Heart right ventricle (tissue), 16 donors: ENCODE measurements at regions of chr19 and their contacts with region 1.

Region 1: GRCh38 chr19:15836595-15837337 is 21.3 kb upstream of the OR10H1 start:
- DNase-seq: peak; percentile 95 to 99
- ATAC-seq: peak; percentile 98 to 100 (median 100)
- H3K4me3 ChIP-seq: peak overlapping the region; percentile 63 to 90 (median 78)
- H3K27ac ChIP-seq: peak overlapping the region; percentile 80 to 99 (median 97)
- H3K4me1 ChIP-seq: peaks cover 0 to 20% (median 7%) of the 10 kb centered on the region in 9 donors
- H3K27me3 ChIP-seq: peaks cover 0 to under 1% (median 0%) of the 10 kb centered on the region in 7 donors
- CTCF ChIP-seq: no peak

Region 2: GRCh38 chr19:14517840-14518505 is 1318.8 kb before region 1 on chr19 and contains the start of gene DNAJB1:
- intact Hi-C with region 1: no loop called
- DNase-seq: peak; percentile 83 to 87
- ATAC-seq: peak; percentile 81 to 90 (median 88)
- H3K4me3 ChIP-seq: peak within 1 kb of the TSS; percentile 65 to 99 (median 92)
- H3K27ac ChIP-seq: peak within 1 kb of the TSS; percentile 96 to 100 (median 100)
- H3K4me1 ChIP-seq: peaks cover 15 to 55% (median 42%) of the 10 kb centered on the region in 9 donors
- H3K27me3 ChIP-seq: no peaks in the 10 kb centered on the region
- CTCF ChIP-seq: no peak
- total RNA-seq, gene DNAJB1: 40.3 to 99.0 (median 46.4) TPM

Region 3: DNA sequence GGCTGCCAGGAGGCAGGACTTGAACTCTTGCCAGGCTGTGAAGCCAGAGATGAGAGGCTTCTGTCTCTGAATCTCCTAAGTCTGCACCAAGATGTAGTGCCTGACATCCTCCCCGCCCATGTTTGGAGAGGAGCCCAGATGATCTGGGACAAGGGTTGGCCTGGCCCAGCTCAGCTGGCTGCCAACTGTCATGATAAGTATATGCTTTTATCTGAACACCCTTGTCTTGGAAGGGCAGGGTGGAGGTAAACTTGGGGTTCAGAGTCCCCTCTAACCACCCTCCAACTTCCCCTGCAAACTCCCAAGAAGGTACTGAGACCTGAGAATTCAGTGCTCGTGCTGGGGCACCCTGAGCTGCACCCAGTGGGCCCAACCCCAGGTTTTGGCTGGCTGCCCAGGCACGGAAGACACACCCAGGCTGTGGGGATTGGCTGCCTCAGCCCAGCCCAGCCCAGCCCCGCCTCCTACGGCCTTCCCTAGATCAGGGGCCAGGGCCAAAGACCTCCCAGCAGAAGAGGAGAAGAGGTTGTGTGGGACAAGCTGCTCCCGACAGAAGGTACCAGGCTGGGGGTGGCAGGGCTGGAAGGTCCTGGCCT is 164.1 kb before region 1 on chr19 and contains the start of gene CYP4F12:
- intact Hi-C with region 1: loop called in 1 of 10 experiments (anchors 5 kb)
- DNase-seq: peak; percentile 88 to 92
- ATAC-seq: peak; percentile 95 to 100 (median 98)
- H3K4me3 ChIP-seq: peak within 1 kb of the TSS in 8 of 10 donors; percentile 3 to 40 (median 25)
- H3K27ac ChIP-seq: peak within 1 kb of the TSS in 9 of 10 donors; percentile 20 to 78 (median 56)
- H3K4me1 ChIP-seq: peaks cover 0 to 15% (median 10%) of the 10 kb centered on the region in 9 donors
- H3K27me3 ChIP-seq: peaks cover 0 to 13% (median 0%) of the 10 kb centered on the region in 7 donors
- CTCF ChIP-seq: no peak
- total RNA-seq, gene CYP4F12: 0.92 to 6.8 (median 2.7) TPM

Region 4: GRCh38 chr19:15869109-15869555 is 32.4 kb after region 1 on chr19:
- intact Hi-C with region 1: no loop called
- DNase-seq: peak in 1 of 2 donors; percentile 15
- ATAC-seq: peak in 4 of 8 donors; percentile 53 to 74 (median 61)
- H3K4me3 ChIP-seq: no peak overlapping the region
- H3K27ac ChIP-seq: no peak overlapping the region
- H3K4me1 ChIP-seq: peaks cover 0 to 3% (median 0%) of the 10 kb centered on the region in 9 donors
- H3K27me3 ChIP-seq: peaks cover 0 to 44% (median 25%) of the 10 kb centered on the region in 7 donors
- CTCF ChIP-seq: peak; percentile 33 to 65 (median 55)

Region 5: DNA sequence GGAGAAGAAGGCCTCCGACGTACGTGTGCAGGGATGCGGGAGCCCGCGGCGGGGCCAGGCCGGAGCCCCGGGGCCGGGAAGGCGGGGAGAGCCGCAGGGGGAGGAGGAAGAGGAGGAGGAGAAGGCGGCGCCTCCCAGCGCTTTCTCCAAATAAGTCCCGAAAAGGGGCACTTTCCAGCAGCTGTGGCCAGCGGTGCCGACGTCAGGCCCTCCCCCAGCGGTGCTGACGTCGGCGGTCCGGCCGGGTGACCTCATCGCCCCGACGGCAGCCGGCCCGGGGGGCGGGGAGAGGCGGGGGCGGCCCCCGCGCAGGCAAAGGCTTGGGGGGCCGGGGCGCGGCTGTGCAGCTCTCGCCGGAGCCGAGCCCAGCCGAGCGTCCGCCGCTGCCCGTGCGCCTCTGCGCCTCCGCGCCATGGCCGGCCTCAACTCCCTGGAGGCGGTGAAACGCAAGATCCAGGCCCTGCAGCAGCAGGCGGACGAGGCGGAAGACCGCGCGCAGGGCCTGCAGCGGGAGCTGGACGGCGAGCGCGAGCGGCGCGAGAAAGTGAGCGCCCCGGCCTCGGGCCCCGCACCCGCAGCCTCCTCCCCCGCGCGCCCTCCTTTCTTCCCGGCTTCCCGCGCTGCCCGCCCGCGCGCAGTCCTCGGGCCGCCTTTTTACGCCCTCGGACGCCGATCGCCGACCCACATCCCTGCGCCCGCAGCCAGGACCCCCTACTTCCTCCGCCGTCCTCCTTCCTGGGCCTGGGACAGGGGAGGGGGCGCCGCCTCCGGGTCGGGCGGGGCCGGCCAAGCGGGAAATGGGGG is 239.6 kb after region 1 on chr19 and contains the start of gene TPM4:
- intact Hi-C with region 1: loop called in 1 of 10 experiments (anchors 5 kb)
- DNase-seq: peak; percentile 93 to 94
- ATAC-seq: peak; percentile 84 to 92 (median 89)
- H3K4me3 ChIP-seq: peak within 1 kb of the TSS; percentile 73 to 100 (median 95)
- H3K27ac ChIP-seq: peak within 1 kb of the TSS; percentile 99 to 100 (median 100)
- H3K4me1 ChIP-seq: peaks cover 0 to 74% (median 45%) of the 10 kb centered on the region in 9 donors
- H3K27me3 ChIP-seq: peaks cover 0 to 4% (median 0%) of the 10 kb centered on the region in 7 donors
- CTCF ChIP-seq: no peak
- total RNA-seq, gene TPM4: 52.0 to 231 (median 72.5) TPM